Common myeloid progenitor, CD34-positive (primary cell): ENCODE measurements at regions of chr9 and their contacts with region 1.

Region 1: DNA sequence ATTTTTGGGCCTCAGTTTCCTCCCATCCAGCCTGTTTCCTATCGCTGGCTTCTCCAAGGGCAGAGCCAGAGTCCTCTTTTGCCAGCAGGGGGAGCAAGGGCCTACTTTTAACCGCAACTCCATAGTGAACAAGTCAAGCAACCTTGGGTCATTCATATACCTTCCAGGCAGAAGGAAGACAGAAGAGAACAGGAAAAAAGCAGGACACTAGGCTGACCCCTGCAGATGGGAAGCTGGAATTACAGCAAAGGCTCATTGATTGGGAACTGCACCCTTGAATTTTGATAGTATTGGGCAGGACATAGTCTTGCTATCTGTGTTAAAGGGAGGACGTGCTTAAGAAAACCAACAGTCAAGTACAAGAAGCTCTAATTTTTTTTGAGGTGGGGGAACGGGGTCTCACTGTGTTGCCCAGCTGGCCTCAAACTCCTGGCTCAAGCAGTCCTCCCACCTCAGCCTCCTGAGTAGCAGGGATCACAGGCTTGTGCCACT is 30.1 kb downstream of the QRFP start:
- DNase-seq: peak; percentile 70 to 74 (median 71)
- H3K4me3 ChIP-seq: no peak overlapping the region
- H3K27ac ChIP-seq: no peak overlapping the region
- H3K4me1 ChIP-seq: no peaks in the 10 kb centered on the region
- H3K27me3 ChIP-seq: no peaks in the 10 kb centered on the region

Region 2: GRCh38 chr9:130701056-130702022 is 165.2 kb before region 1 on chr9:
- CTCF ChIA-PET with region 1: interaction called, 249 read pairs
- POLR2A ChIA-PET with region 1: no interaction called
- DNase-seq: peak; percentile 63 to 78 (median 73)
- H3K4me3 ChIP-seq: no peak overlapping the region
- H3K27ac ChIP-seq: no peak overlapping the region
- H3K4me1 ChIP-seq: peaks cover 0 to 4% (median 0%) of the 10 kb centered on the region in 4 experiments
- H3K27me3 ChIP-seq: no peaks in the 10 kb centered on the region

Region 3: DNA sequence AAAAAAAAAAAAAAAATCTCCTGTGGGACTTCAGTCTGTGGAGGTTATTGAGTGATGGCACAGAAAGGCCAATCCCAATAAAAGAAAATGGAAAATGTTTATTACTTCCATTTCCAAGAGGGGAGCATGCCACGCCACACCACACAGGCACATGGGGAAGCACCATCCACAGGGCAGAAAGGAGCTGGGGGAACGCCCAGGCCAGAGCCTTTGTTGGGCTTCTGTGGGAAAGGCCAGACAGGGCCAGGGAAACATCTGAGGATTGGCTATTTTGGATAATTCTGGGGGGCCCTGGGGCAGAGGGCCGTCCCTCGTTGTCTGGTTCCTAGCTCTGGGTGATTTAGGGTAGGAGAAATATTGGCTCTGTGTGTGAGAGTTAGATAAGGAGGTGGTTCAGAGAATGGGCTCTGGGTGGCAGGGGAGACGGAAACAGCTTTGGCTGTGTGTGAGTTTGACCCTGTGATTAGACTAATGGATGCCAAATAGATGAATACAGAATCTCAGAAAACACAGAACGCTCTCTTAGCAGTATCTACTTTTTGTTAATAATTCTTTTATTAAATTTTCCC is 80.5 kb before region 1 on chr9:
- CTCF ChIA-PET with region 1: interaction called, 11 read pairs
- POLR2A ChIA-PET with region 1: no interaction called
- DNase-seq: peak; percentile 47 to 87 (median 72)
- H3K4me3 ChIP-seq: no peak overlapping the region
- H3K27ac ChIP-seq: no peak overlapping the region
- H3K4me1 ChIP-seq: peaks cover 0 to 15% (median 1%) of the 10 kb centered on the region in 4 experiments
- H3K27me3 ChIP-seq: no peaks in the 10 kb centered on the region

Region 4: DNA sequence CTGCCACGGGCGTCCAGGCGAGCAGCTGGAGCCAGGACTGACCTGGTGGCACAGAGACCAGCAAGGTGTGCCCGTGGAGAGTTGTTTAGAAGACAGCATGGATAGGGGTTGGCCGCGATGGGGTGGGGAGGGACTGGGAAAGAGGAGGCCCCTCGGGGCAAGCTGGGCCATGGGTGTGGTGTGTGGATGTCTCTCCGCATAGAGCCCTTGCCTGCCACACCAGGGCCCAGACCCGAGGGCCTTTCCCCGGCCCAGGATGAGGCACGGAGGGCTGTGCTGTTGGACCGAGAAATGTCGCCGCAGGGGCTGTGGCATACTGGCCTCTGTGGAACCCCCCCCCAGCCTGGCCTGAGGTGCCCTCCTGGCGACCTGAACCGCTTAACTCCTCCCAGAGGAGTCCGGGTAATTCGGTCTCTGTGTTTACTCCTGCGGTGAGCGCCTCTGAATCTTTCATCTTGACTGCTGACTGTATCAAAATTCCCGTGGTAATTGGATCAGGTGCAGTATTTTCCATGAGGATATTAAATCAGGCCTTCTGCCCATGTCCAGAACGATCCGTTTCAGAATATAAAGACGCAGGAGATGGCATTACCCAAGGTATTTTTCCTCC is 119.9 kb after region 1 on chr9:
- CTCF ChIA-PET with region 1: interaction called, 10 read pairs
- POLR2A ChIA-PET with region 1: no interaction called
- DNase-seq: no peak
- H3K4me3 ChIP-seq: no peak overlapping the region
- H3K27ac ChIP-seq: no peak overlapping the region
- H3K4me1 ChIP-seq: peaks cover 0 to 12% (median 1%) of the 10 kb centered on the region in 4 experiments
- H3K27me3 ChIP-seq: peaks cover 0 to 3% (median 0%) of the 10 kb centered on the region in 5 experiments

Region 5: DNA sequence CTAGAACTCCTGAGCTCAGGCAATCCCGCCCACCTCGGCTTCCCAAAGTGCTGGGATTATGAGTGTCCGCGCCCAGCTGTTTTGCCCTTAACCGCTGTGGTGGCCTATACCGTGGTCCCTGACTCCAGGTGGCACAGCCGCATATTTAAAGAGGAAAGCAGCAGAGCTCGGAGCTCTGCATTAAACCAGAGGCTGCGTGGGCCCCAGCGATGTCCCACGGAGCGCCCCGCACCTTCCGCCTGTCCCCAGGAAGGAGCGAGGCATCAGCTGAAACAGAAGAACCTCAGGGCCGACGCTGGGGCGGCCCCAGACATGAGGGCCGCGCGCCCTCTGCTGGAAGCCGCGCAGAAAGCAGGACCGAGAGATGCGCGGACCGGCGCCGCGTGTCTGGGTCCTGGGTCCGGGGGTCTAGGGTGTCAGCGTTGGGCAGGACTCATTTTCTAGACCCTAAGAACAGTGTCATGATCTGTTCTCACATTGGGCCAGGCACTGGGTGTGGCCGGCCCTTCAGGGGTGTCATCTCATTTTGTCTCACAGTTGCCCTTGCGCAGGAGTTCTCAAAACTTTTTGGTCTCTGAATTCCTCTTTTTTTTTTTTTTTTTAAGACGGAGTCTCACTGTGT is 180.2 kb after region 1 on chr9:
- CTCF ChIA-PET with region 1: interaction called, 19 read pairs
- POLR2A ChIA-PET with region 1: no interaction called
- DNase-seq: peak; percentile 70 to 85 (median 82)
- H3K4me3 ChIP-seq: peak overlapping the region in 3 of 7 experiments; percentile 43 to 54 (median 52)
- H3K27ac ChIP-seq: no peak overlapping the region
- H3K4me1 ChIP-seq: peaks cover 2 to 18% (median 16%) of the 10 kb centered on the region in 4 experiments
- H3K27me3 ChIP-seq: no peaks in the 10 kb centered on the region